ENCODE measurements at regions of chr14 and their contacts with region 1.

Region 1: DNA sequence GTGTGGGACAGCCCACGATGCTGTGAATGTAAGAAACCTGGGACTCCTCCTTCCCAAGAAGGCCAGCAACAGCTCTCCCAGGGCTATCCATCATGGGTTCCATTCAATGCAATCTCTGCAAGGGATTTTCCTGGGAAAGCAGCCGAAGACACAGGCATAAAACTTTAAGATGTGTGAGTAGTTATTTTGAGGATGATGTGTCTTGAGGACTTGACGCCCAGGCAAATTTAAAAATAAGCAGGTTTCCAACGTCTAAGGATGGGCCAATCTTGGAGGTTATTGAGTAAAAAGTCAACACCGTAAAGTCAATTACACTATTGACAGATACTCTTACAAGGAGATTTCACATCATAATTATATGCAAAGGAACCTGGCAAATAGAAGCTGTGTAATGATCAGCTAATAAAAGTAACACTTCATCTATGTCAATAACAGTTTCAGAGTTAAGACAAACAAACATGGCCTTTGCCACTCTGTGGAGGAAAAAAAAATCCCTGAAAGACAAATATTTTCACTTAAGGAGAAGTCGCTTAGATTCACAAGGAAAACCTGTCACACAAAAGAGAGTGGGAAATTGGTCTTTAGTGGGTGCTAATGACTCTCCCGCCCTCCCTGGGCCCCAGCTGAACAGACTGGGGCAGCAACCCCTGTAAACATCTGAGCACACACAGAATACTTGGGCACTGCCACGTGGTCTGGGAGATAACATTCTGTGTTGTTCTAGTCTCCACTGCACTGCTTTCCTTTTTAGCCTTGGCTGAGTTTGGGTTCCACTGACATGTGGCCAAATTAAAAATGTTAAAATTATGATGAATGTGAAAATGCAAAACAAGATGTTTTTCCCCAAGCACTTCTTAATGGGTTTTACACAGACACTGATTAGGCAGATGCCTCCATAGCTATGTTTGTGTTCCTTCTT is 240.9 kb downstream of the FOXN3 start:
- DNase-seq: no peak
- H3K4me3 Mint-ChIP-seq: no peak overlapping the region
- H3K27ac Mint-ChIP-seq: no peak overlapping the region
- H3K4me1 Mint-ChIP-seq: peaks cover 4% of the 10 kb centered on the region
- H3K27me3 Mint-ChIP-seq: no peaks in the 10 kb centered on the region

Region 2: DNA sequence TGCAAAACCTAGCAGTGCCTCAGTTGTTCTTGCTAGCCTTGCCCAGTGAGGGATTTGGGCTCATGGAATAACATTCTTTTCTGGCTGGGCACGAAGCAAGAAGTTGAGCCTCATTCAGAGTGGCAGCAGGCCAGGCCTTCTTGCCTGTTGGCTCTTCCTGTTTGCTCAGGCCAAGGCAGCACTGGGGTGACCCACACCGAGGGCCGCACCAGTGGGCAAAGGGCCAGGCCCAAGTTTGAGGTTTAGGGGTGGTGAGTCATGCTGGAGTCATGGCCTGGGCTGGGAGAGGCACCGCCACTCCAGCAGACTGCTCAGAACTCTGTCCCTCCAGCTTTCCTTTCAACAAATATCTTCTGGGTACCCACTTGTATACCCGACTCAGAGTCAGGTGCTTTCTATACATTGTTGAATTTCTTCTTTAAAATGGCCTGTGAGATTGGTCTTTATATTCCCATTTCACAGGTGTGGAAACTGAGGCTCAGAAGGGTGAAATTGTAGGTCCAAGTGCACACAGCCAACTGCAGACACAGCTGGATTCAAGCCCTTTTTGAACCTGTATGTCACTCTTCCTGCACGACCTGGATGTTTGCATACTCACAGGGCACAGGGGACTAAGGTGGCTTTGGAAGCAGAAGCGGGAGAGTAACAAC is 38.5 kb before region 1 on chr14:
- CTCF ChIA-PET with region 1: no interaction called
- POLR2A ChIA-PET with region 1: no interaction called
- DNase-seq: no peak
- H3K4me3 Mint-ChIP-seq: no peak overlapping the region
- H3K27ac Mint-ChIP-seq: no peak overlapping the region
- H3K4me1 Mint-ChIP-seq: no peaks in the 10 kb centered on the region
- H3K27me3 Mint-ChIP-seq: no peaks in the 10 kb centered on the region

Region 3: GRCh38 chr14:89165189-89166181 is 10.7 kb before region 1 on chr14:
- CTCF ChIA-PET with region 1: interaction called, 11 read pairs
- POLR2A ChIA-PET with region 1: no interaction called
- DNase-seq: no peak
- H3K4me3 Mint-ChIP-seq: no peak overlapping the region
- H3K27ac Mint-ChIP-seq: no peak overlapping the region
- H3K4me1 Mint-ChIP-seq: peaks cover 7% of the 10 kb centered on the region
- H3K27me3 Mint-ChIP-seq: no peaks in the 10 kb centered on the region

Measured in activated CD4-positive, alpha-beta memory T cell treated with anti-CD3 and anti-CD28 coated beads, Interleukin-2, amount 10 ng/mL, durations not matched to agents 7 days and 5 days (primary cell).